Prostate gland (tissue), 2 donors: ENCODE measurements at regions of chr1 and their contacts with region 1.

Region 1: DNA sequence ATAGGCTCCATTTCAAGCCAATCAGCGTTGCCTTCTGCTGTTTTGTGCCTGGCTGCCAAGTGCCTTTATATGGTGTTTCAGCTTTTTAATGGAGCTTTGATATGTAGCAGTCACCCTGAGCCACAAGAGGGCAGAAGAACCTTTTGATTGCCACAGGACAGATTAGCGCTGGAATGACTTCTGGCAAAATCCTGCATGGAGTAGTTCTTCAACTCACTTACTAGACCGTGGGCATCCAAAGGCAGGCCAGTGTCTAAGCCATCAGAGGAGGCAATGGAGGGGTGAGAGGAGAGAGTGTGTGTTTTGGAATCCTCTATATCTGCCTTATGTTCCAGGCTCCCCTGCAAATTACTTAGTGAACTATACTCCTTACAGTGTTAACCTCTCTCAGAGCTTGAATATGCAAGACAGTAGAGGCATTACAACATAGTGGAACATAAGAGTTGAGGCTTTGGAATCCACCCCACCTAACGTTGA is 56.2 kb downstream of the ST3GAL3 start:
- DNase-seq: peak; percentile 84
- H3K4me3 ChIP-seq: no peak overlapping the region
- H3K27ac ChIP-seq: no peak overlapping the region
- H3K4me1 ChIP-seq: no peaks in the 10 kb centered on the region
- H3K27me3 ChIP-seq: no peaks in the 10 kb centered on the region
- CTCF ChIP-seq: peak; percentile 32 to 95 (median 86)
- POLR2A ChIP-seq: no peak

Region 2: DNA sequence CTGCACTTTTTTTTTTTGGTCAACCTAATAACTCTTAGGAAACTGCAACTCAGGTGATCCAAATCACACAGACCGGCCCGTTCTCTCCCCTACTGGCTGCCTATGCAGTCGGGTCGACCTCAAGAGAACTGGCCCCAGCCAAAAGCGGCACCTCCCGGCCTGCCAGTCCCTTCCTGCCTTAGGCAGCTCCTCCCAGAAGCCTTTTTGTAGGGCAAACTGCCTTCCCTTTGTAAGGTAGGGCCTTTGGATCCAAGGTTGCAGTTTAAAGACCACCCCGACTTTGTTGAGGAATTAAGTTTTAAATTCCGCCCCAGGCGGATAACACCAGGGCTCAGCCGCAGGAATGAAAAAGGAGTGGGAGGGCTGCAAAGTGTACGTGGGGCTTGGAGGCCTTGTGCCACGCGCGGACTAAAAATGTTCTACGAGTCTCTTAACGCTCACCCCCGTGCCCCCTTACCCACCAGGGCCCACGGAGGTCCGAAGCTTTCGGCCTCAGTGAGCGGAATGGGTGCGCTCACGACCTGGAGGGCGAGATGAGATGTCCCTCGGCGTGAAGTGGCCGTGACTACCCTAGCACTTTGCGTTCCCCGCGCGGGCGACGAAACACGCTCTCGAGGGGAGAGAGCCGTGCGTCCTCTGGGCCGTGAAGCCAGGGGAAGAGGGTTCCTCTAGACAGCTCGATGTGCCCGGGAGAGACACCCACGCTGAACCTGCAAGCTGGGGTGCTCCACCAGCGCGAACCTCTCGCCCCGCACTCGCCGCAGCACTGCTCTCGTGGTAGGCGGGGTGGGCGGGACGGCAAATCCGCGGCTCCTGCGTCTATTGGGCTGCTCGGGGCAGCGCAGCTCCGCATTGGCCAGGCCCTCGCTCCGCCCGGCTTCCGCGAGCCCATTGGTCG is 56.7 kb before region 1 on chr1:
- intact Hi-C with region 1: loop called (anchors 2 kb)
- DNase-seq: peak; percentile 89
- H3K4me3 ChIP-seq: peak overlapping the region; percentile 67 to 90
- H3K27ac ChIP-seq: peak overlapping the region in 1 of 2 donors; percentile 72
- H3K4me1 ChIP-seq: peaks cover 2% of the 10 kb centered on the region
- H3K27me3 ChIP-seq: no peaks in the 10 kb centered on the region
- CTCF ChIP-seq: no peak
- POLR2A ChIP-seq: peak; percentile 52

Region 3: DNA sequence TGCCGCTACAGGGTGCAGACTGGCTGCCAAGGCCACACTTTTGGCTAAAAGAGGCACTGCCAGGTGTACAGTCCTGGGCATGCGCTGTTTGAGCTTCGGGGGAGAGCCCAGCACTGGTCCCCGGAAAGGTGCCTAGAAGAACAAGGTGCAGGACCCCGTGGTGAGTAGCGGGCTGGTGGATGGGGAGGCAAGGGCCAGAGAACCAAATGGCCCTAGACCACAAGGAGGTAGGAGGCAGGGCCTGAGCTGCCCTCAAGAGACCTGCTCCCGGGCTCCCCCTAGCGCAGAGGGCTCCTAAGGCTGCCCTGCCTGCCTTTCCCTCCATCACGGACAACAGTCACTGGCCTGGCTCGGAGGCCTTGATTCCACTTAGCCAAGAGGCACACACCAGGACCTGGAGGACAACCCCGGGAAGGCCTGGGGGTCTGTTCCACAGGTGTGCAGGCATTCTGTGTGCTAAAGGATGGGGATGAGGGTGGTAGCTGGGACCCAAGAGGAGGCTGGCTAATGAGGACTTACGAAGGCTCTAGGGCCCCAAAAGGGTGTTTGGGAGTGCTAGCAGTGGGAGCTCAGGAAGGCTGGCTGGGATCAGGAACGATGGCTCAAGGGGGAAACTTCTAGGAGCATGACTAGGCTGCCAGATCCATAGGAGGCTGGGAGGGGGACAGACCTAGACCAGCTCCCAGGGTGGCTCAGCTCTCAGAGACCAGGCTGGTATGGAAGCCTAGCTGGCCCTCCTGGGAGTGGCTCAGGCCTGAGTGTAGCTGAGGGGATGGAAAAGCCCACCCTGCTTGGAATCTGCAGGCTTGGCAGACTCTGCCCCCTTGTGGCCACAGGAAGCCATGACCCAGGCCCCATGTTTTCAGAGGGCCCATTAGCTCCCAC is 170.8 kb after region 1 on chr1:
- intact Hi-C with region 1: loop called (anchors 1 kb)
- DNase-seq: no peak
- H3K4me3 ChIP-seq: peak overlapping the region; percentile 38 to 45
- H3K27ac ChIP-seq: peak overlapping the region; percentile 75
- H3K4me1 ChIP-seq: no peaks in the 10 kb centered on the region
- H3K27me3 ChIP-seq: no peaks in the 10 kb centered on the region
- CTCF ChIP-seq: peak; percentile 84 to 93 (median 90)
- POLR2A ChIP-seq: no peak

Region 4: DNA sequence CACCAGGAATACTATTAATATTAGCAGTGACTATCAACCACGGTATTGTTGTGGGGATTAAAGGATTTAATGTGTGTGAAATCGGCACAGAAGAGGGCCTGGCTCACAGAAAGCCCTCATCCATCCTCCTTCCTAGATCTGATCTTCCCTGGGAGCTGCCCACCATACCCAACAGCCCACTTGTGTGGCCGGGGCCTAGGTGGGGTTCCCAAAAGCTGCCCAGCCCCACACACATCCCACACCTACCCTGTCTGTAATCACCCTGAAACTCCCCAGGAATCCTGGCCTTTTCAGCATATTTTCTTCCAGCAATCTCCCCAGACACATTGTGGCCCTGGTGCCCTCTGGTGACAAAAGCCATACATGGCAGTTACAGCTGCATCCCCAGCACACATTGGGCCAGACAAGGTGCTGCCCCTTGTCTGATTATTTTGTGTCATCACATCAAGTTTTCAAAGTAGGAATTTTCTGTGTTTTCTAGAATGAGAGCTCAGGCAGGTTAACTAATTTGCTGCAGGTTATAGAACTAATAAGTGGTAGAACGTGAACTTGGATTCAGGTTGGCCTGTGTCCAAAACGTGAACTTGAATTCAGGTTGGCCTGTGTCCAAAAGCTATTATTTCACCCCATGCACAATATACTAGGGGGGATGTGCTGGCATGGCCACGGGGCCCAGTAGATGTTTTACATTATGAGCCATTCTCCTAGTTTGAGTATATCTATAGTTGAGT is 273.0 kb after region 1 on chr1:
- intact Hi-C with region 1: loop called (anchors 5 kb)
- DNase-seq: peak; percentile 61
- H3K4me3 ChIP-seq: no peak overlapping the region
- H3K27ac ChIP-seq: peak overlapping the region in 1 of 2 donors; percentile 28
- H3K4me1 ChIP-seq: no peaks in the 10 kb centered on the region
- H3K27me3 ChIP-seq: no peaks in the 10 kb centered on the region
- CTCF ChIP-seq: peak; percentile 43 to 86 (median 76)
- POLR2A ChIP-seq: no peak